ENCODE measurements at regions of chr1 and their contacts with region 1.

Region 1: DNA sequence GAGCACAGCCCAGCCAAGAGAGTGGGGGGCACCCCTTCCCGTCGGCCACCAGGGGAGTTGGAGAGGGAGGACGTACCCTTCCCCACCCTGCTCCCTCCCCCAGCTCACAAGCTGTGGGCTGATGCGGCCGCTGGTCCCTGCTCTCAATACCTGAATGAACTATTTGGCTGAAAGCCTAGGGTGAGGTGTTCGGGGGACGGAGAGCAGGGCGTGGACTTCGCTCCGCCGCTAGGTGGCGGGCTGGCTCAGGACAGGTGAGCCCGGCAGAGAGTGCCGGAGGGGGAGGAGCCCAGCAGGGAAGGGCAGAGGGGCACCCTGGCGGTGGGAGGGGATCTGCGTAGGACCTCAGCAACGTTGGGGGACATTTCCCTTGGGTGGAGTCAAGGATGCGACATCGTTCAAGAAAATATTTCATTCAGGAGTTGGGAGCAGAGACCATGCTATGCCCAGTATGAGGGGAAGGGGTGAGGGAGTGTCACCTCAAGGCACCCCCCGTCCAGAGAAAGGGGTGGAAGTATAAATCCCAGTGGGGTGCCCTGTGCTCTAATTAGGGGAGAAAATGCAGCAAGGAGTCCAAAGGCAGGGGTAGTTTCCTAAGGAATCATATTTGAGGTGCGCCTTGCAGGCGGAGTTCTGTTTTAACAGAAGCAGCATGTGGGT is 12.0 kb upstream of the RHBG start:
- DNase-seq: peak; percentile 61
- H3K4me3 ChIP-seq: no peak overlapping the region
- H3K27ac ChIP-seq: no peak overlapping the region
- H3K4me1 ChIP-seq: peaks cover 6% of the 10 kb centered on the region
- H3K27me3 ChIP-seq: no peaks in the 10 kb centered on the region
- CTCF ChIP-seq: peak; percentile 87 to 96

Region 2: GRCh38 chr1:156549385-156549784 is 192.4 kb after region 1 on chr1:
- CTCF ChIA-PET with region 1: no interaction called
- dilution Hi-C with region 1: no loop called
- in situ Hi-C with region 1: no loop called
- intact Hi-C with region 1: no loop called
- DNase-seq: no peak
- H3K4me3 ChIP-seq: no peak overlapping the region
- H3K27ac ChIP-seq: no peak overlapping the region
- H3K4me1 ChIP-seq: peaks cover 12% of the 10 kb centered on the region
- H3K27me3 ChIP-seq: no peaks in the 10 kb centered on the region
- CTCF ChIP-seq: no peak

Region 3: GRCh38 chr1:156601122-156601830 is 244.3 kb after region 1 on chr1 and contains the start of gene GPATCH4:
- CTCF ChIA-PET with region 1: no interaction called
- dilution Hi-C with region 1: no loop called
- in situ Hi-C with region 1: loop called in 1 of 2 experiments (anchors 25 kb)
- intact Hi-C with region 1: loop called (anchors 10 kb)
- DNase-seq: peak; percentile 81
- H3K4me3 ChIP-seq: peak within 1 kb of the TSS; percentile 55 to 77 (median 66)
- H3K27ac ChIP-seq: peak within 1 kb of the TSS; percentile 76
- H3K4me1 ChIP-seq: peaks cover 18% of the 10 kb centered on the region
- H3K27me3 ChIP-seq: no peaks in the 10 kb centered on the region
- CTCF ChIP-seq: no peak
- total RNA-seq, gene GPATCH4: 16.3 to 49.7 TPM

Measured in mammary epithelial cell (primary cell).